Activated CD8-positive, alpha-beta T cell treated with anti-CD3 and anti-CD28 coated beads for 36 hours (primary cell): ENCODE measurements at regions of chr22 and their contacts with region 1.

Region 1: GRCh38 chr22:40024201-40025061 is 29.7 kb downstream of the FAM83F start:
- DNase-seq: peak; percentile 76
- ATAC-seq: peak; percentile 83
- H3K4me3 Mint-ChIP-seq: no peak overlapping the region
- H3K27ac Mint-ChIP-seq: no peak overlapping the region
- H3K4me1 Mint-ChIP-seq: peaks cover 5% of the 10 kb centered on the region
- H3K27me3 Mint-ChIP-seq: no peaks in the 10 kb centered on the region
- CTCF ChIP-seq: peak; percentile 99

Region 2: DNA sequence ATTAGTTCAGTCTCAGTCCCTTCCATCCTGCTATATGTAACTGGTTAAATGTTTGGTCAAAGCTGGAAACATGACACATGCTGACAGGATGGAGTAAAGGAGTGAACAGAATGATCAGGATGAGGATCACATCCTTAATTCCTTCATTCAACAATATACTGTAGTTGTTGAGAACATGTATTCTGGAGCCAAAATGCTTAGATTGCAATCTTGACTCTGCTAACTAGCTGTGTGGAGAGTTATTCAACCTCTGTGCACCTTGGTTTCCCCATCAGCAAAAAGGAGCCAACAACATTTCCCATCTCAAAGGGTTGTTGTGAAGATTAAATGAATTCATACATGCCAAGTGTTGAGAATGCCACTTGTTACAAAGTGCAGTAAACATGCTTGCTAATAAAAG is 143.7 kb before region 1 on chr22:
- CTCF ChIA-PET with region 1: interaction called, 10 read pairs
- POLR2A ChIA-PET with region 1: no interaction called
- intact Hi-C with region 1: no loop called
- DNase-seq: no peak
- ATAC-seq: no peak
- H3K4me3 Mint-ChIP-seq: no peak overlapping the region
- H3K27ac Mint-ChIP-seq: no peak overlapping the region
- H3K4me1 Mint-ChIP-seq: peaks cover 7% of the 10 kb centered on the region
- H3K27me3 Mint-ChIP-seq: no peaks in the 10 kb centered on the region
- CTCF ChIP-seq: no peak

Region 3: GRCh38 chr22:39917776-39918495 is 106.5 kb before region 1 on chr22:
- CTCF ChIA-PET with region 1: interaction called, 19 read pairs
- POLR2A ChIA-PET with region 1: interaction called, 3 read pairs
- intact Hi-C with region 1: no loop called
- DNase-seq: no peak
- ATAC-seq: no peak
- H3K4me3 Mint-ChIP-seq: peak overlapping the region; percentile 80
- H3K27ac Mint-ChIP-seq: peak overlapping the region; percentile 92
- H3K4me1 Mint-ChIP-seq: peaks cover 79% of the 10 kb centered on the region
- H3K27me3 Mint-ChIP-seq: no peaks in the 10 kb centered on the region
- CTCF ChIP-seq: no peak

Region 4: GRCh38 chr22:39946503-39947219 is 77.8 kb before region 1 on chr22:
- CTCF ChIA-PET with region 1: interaction called, 26 read pairs
- POLR2A ChIA-PET with region 1: no interaction called
- intact Hi-C with region 1: no loop called
- DNase-seq: peak; percentile 37
- ATAC-seq: no peak
- H3K4me3 Mint-ChIP-seq: peak overlapping the region; percentile 60
- H3K27ac Mint-ChIP-seq: peak overlapping the region; percentile 90
- H3K4me1 Mint-ChIP-seq: peaks cover 96% of the 10 kb centered on the region
- H3K27me3 Mint-ChIP-seq: no peaks in the 10 kb centered on the region
- CTCF ChIP-seq: no peak

Region 5: DNA sequence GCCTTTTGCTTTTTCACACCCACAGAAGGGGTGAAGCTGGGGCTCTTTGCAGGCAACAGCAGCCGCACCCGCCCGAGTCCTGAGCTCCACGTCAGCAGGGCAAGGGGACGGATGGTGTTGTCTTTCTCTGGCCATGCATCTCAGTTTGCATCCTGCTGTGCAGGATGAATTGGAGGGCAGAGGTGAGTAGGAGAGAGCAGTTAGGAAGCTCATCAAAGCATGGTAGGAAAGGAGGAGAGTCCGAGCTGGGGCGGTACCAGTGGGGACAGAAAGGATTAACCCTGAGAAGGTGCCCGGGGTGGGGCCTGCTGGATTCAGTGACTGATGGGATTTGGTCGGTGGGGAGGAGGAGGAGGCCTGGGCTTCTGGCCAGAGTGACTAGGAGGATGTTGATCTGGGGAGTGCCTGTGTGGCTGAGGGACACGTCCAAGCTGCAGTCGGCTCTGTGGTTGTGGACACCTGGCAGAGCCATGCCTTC is 15.1 kb before region 1 on chr22:
- CTCF ChIA-PET with region 1: interaction called, 29 read pairs
- POLR2A ChIA-PET with region 1: no interaction called
- intact Hi-C with region 1: no loop called
- DNase-seq: no peak
- ATAC-seq: peak; percentile 26
- H3K4me3 Mint-ChIP-seq: peak overlapping the region; percentile 39
- H3K27ac Mint-ChIP-seq: peak overlapping the region; percentile 85
- H3K4me1 Mint-ChIP-seq: peaks cover 20% of the 10 kb centered on the region
- H3K27me3 Mint-ChIP-seq: peaks cover 4% of the 10 kb centered on the region
- CTCF ChIP-seq: no peak

Region 6: DNA sequence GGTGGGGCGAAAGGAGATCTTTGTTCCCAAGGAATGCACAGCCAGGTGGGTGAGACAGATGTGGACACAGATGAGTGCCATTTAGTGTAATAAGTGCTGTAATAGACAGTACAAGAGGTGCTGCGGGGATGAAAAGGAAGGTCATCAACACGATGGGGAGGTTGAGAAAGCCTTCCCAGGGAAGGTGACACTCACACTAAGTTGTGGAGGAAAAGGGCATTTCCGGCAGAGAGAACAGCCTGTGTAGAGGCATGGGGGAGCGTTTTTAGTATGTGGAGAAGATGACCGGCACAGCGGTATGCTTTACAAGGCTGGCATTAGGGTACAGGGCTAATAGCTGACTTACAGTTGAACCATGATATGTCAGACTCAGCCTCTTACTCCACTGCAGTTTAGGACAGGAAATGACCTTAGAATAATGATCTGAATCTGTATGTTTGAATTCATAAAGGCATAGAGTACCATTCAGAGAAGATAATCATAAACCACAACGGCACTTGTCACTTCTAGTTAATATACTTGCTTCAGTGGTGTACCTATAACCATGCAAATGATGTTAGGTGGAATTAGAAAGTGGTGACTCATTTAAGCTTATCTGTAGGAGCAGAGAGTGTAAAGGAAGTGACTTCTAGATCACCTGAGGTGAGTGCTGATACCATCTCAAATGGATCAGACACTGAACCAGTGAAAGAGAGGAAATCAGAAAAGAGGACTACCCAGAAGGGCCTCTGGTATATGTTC is 30.9 kb after region 1 on chr22:
- CTCF ChIA-PET with region 1: no interaction called
- POLR2A ChIA-PET with region 1: no interaction called
- intact Hi-C with region 1: no loop called
- DNase-seq: peak; percentile 50
- ATAC-seq: peak; percentile 86
- H3K4me3 Mint-ChIP-seq: peak overlapping the region; percentile 74
- H3K27ac Mint-ChIP-seq: peak overlapping the region; percentile 95
- H3K4me1 Mint-ChIP-seq: peaks cover 78% of the 10 kb centered on the region
- H3K27me3 Mint-ChIP-seq: no peaks in the 10 kb centered on the region
- CTCF ChIP-seq: no peak